Psoas muscle (tissue), 8 donors: ENCODE measurements at regions of chr2 and their contacts with region 1.

Region 1: DNA sequence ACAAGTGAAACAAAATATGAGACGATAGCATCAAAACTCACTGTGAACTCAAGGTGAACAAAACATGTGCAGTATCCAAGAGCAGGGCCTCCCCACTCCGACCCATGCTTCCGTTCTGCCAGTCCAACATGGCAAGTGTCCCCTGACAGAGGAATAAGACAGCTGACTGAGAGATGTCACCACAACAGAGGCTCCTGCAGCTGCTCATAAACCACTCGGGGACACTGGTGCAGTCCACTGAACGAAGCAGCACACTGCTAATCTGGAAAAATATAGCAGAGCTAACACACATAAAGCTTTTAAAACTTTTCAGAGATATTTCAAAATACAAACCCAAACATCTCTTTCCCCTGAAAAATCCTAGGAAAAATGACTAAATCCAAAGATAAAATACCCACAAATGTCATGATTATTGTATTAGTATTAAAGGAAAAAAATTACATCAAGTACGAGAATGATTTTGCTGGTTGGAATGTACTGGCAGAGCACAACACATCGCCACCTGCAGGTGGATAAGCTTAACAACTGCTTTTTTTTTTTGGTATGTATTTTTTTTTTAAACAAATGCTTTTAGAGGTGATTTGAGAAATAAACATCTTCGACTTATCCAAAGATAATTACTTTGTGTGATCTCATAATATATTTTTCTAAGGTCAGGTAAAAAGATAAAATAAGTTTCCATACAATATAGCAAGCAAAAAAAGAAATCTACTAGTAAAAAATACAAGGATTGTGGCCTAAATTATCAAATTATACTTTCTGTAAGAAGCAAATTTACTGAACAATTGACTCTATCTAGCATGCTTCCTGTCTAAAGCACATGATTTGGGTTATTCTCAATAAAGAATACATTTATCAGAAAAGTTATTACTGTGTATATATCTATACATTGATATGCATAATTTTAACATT is 18.6 kb downstream of the THADA start:
- DNase-seq: no peak
- ATAC-seq: peak in 2 of 4 donors; percentile 58 to 73
- H3K4me3 ChIP-seq: no peak overlapping the region
- H3K27ac ChIP-seq: no peak overlapping the region
- H3K4me1 ChIP-seq: no peaks in the 10 kb centered on the region
- H3K27me3 ChIP-seq: no peaks in the 10 kb centered on the region
- CTCF ChIP-seq: peak; percentile 75

Region 2: DNA sequence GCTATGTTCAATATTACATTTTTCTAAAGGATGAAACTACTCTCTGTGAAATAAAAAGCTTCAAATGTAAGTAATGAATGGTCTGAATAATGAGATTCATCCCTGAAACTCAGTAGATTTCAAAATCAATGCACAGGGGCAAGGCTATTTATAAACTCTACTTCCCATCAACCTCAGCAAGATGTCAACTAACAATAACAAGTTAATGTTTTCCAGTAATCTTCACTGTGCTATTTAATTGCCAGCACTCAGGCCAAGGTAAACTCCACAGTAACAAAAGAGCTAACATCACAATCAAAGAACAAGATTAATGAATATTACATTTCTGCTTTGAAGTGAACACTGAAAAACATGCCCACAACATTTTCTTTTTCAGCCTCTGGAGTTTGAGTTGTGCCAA is 206.5 kb before region 1 on chr2:
- intact Hi-C with region 1: no loop called
- DNase-seq: no peak
- ATAC-seq: no peak
- H3K4me3 ChIP-seq: no peak overlapping the region
- H3K27ac ChIP-seq: no peak overlapping the region
- H3K4me1 ChIP-seq: peaks cover 29% of the 10 kb centered on the region
- H3K27me3 ChIP-seq: no peaks in the 10 kb centered on the region
- CTCF ChIP-seq: no peak

Region 3: GRCh38 chr2:43519643-43520221 is 57.5 kb before region 1 on chr2:
- intact Hi-C with region 1: no loop called
- DNase-seq: no peak
- ATAC-seq: peak in 2 of 4 donors; percentile 30 to 49
- H3K4me3 ChIP-seq: no peak overlapping the region
- H3K27ac ChIP-seq: peak overlapping the region; percentile 69
- H3K4me1 ChIP-seq: peaks cover 45% of the 10 kb centered on the region
- H3K27me3 ChIP-seq: no peaks in the 10 kb centered on the region
- CTCF ChIP-seq: no peak

Region 4: GRCh38 chr2:43950383-43951008 is 373.3 kb after region 1 on chr2:
- intact Hi-C with region 1: loop called in 1 of 2 experiments (anchors 10 kb)
- DNase-seq: no peak
- ATAC-seq: peak in 1 of 4 donors; percentile 45
- H3K4me3 ChIP-seq: no peak overlapping the region
- H3K27ac ChIP-seq: no peak overlapping the region
- H3K4me1 ChIP-seq: no peaks in the 10 kb centered on the region
- H3K27me3 ChIP-seq: no peaks in the 10 kb centered on the region
- CTCF ChIP-seq: peak; percentile 28